IMR-90 (cell line): ENCODE measurements at regions of chr11 and their contacts with region 1.

Region 1: DNA sequence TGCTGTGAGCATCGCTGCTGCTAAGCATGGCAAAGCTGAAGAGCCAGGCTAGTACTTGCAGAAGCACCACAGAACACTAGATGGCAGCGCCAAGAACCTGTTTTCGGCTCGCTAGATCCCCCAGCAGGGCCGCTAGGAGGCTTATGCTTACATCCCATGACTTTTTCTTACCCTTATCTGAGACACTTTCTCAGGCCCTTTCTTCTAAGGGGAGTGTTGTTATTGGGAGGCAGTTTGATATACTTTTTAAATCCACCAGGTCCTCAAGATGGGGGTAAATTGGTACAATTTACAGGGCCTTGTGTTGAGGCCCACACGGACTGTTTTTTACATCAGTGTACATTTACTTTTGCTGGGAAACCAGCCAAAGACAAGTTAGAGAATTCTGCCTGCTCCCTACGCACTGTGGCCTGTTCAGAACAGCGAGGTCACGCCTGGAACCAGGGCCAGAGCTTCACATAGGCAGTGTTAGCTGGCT is 4.0 kb downstream of the TRIM6 start:
- DNase-seq: peak; percentile 90
- ATAC-seq: peak; percentile 75
- H3K4me3 ChIP-seq: no peak overlapping the region
- H3K27ac ChIP-seq: no peak overlapping the region; the same call in 1 of the 2 replicates
- H3K4me1 ChIP-seq: peaks cover 8% of the 10 kb centered on the region
- H3K27me3 ChIP-seq: no peaks in the 10 kb centered on the region
- CTCF ChIP-seq: peak; percentile 98
- POLR2A ChIP-seq: no peak
- RAD21 ChIP-seq: peak; percentile 79

Region 2: GRCh38 chr11:3723014-3723708 is 1877.3 kb before region 1 on chr11:
- CTCF ChIA-PET with region 1: no interaction called
- POLR2A ChIA-PET with region 1: no interaction called
- dilution Hi-C with region 1: no loop called
- in situ Hi-C with region 1: no loop called
- intact Hi-C with region 1: loop called (anchors 10 kb)
- DNase-seq: peak; percentile 99
- ATAC-seq: peak; percentile 94
- H3K4me3 ChIP-seq: no peak overlapping the region
- H3K27ac ChIP-seq: peak overlapping the region; percentile 30; the same call in 1 of the 2 replicates
- H3K4me1 ChIP-seq: peaks cover 12% of the 10 kb centered on the region
- H3K27me3 ChIP-seq: no peaks in the 10 kb centered on the region
- CTCF ChIP-seq: no peak
- POLR2A ChIP-seq: no peak
- RAD21 ChIP-seq: no peak

Region 3: DNA sequence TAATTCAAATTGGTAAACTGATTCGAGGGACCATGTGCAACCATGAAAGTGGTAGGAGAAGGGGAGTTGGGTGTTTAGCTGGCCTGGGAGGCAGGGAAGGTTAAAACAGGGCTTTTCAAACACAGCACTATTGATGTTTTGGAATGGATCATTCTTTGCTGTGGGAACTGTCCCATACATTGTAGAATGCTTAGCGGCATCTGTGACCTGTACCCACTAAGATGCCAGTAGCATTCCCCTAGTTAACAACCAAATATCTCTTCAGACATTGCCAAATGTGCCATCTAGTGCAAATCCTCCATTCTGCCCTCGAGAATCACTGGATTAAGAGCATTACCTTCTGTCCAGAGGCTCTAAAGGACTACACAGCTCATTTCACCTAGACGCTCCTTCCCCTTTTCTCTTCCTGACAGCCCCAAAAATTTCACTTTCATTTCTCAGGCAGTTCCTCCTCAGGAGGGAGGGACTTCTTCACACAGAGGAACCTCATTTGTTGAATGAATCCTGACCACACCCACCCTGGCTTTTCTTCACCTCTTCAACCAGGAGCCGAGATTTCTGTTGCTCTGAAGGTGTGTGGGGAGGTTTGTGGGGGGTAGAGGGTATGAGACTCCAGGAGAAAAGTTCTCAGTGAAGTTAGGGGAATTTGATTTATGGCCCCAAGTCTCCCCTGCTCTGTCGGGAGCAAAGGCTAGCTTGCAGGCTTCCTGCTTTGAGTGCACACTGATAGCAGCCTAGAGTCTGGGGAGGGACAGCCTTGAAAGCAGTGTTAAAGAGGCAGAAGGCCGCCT is 24.3 kb after region 1 on chr11 and contains the start of gene TRIM34:
- CTCF ChIA-PET with region 1: interaction called, 3 read pairs
- POLR2A ChIA-PET with region 1: no interaction called
- dilution Hi-C with region 1: no loop called
- in situ Hi-C with region 1: no loop called
- intact Hi-C with region 1: loop called (anchors 1 kb)
- DNase-seq: peak; percentile 62
- ATAC-seq: peak; percentile 78
- H3K4me3 ChIP-seq: peak within 1 kb of the TSS; percentile 46
- H3K27ac ChIP-seq: peak within 1 kb of the TSS; percentile 46
- H3K4me1 ChIP-seq: peaks cover 21% of the 10 kb centered on the region
- H3K27me3 ChIP-seq: no peaks in the 10 kb centered on the region
- CTCF ChIP-seq: no peak
- POLR2A ChIP-seq: no peak
- RAD21 ChIP-seq: no peak
- total RNA-seq, gene TRIM34: 8.6 and 12.5 TPM in 2 replicates

Region 4: GRCh38 chr11:5684646-5685362 is 84.4 kb after region 1 on chr11 and contains the start of gene TRIM5:
- CTCF ChIA-PET with region 1: interaction called, 5 read pairs
- POLR2A ChIA-PET with region 1: no interaction called
- dilution Hi-C with region 1: no loop called
- in situ Hi-C with region 1: no loop called
- intact Hi-C with region 1: loop called (anchors 2 kb)
- DNase-seq: peak; percentile 99
- ATAC-seq: peak; percentile 95
- H3K4me3 ChIP-seq: peak within 1 kb of the TSS; percentile 56
- H3K27ac ChIP-seq: peak within 1 kb of the TSS; percentile 67
- H3K4me1 ChIP-seq: no peaks in the 10 kb centered on the region
- H3K27me3 ChIP-seq: no peaks in the 10 kb centered on the region
- CTCF ChIP-seq: peak; percentile 58
- POLR2A ChIP-seq: peak; percentile 95
- RAD21 ChIP-seq: peak; percentile 46
- total RNA-seq, gene TRIM5: 49.1 and 58.0 TPM in 2 replicates

Region 5: DNA sequence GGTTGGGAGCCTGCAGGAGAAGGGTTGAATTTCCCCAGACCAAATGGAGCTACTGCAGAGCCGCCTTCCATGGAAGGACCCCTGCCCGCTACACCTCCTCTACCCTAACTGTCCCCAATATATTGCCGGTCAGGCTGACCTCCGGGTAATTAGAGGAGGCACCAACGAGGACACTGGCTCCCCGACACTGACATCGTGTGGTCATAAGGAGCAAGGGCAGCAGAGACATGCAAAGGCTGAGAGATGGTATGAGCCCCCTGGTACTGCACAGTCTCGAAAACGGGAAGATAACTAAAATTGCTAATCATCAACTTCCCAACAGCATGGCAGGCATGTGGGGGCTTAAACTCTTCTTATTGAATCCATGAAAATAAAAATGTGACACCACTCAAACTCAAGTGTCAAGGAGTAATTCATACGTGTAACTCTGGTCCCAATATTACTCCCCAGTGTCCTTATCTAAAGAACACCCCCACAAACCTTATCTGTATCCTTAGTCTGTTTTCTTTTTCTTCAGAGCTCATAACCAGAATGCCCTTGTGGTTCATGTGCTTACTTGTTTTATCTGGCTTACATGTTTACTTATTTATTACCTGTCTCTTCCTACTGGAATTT is 715.5 kb after region 1 on chr11:
- CTCF ChIA-PET with region 1: no interaction called
- POLR2A ChIA-PET with region 1: no interaction called
- dilution Hi-C with region 1: no loop called
- in situ Hi-C with region 1: loop called (anchors 25 kb)
- intact Hi-C with region 1: no loop called
- DNase-seq: peak; percentile 65
- ATAC-seq: peak; percentile 32
- H3K4me3 ChIP-seq: no peak overlapping the region
- H3K27ac ChIP-seq: no peak overlapping the region
- H3K4me1 ChIP-seq: peaks cover 7% of the 10 kb centered on the region
- H3K27me3 ChIP-seq: no peaks in the 10 kb centered on the region
- CTCF ChIP-seq: peak; percentile 84
- POLR2A ChIP-seq: peak; percentile 30; the same call in 1 of the 2 replicates
- RAD21 ChIP-seq: peak; percentile 85